Mammary epithelial cell (primary cell): ENCODE measurements at regions of chr18 and their contacts with region 1.

Region 1: DNA sequence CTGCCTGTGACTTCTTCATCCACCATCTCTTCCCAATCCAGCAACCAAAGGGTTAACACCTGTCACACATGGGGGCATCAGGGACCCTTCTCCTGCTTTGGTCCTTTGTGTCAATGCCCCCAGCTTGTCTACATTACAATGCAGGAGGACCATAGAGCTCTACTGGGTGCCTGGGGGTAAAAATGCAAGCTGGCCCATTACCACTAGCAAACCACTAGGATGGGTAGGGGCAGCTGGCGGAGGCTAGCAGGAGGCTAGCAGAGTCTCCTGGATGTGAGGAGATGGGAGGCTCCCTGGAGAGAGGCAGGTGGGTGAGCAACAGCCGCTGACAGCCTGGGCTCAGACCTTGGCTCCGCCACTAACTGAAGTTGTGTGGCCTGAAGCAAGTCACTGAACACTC is 153.4 kb upstream of the SKOR2 start:
- DNase-seq: no peak
- H3K4me3 ChIP-seq: no peak overlapping the region
- H3K27ac ChIP-seq: no peak overlapping the region
- H3K4me1 ChIP-seq: no peaks in the 10 kb centered on the region
- H3K27me3 ChIP-seq: no peaks in the 10 kb centered on the region
- CTCF ChIP-seq: no peak

Region 2: GRCh38 chr18:46843372-46843771 is 561.5 kb before region 1 on chr18:
- CTCF ChIA-PET with region 1: no interaction called
- dilution Hi-C with region 1: no loop called
- in situ Hi-C with region 1: no loop called
- intact Hi-C with region 1: no loop called
- DNase-seq: no peak
- H3K4me3 ChIP-seq: no peak overlapping the region
- H3K27ac ChIP-seq: no peak overlapping the region
- H3K4me1 ChIP-seq: no peaks in the 10 kb centered on the region
- H3K27me3 ChIP-seq: no peaks in the 10 kb centered on the region
- CTCF ChIP-seq: no peak

Region 3: GRCh38 chr18:47254341-47254939 is 150.4 kb before region 1 on chr18:
- CTCF ChIA-PET with region 1: no interaction called
- dilution Hi-C with region 1: no loop called
- in situ Hi-C with region 1: no loop called
- intact Hi-C with region 1: no loop called
- DNase-seq: peak; percentile 29
- H3K4me3 ChIP-seq: no peak overlapping the region
- H3K27ac ChIP-seq: no peak overlapping the region
- H3K4me1 ChIP-seq: peaks cover 4% of the 10 kb centered on the region
- H3K27me3 ChIP-seq: peaks cover 46% of the 10 kb centered on the region
- CTCF ChIP-seq: no peak

Region 4: GRCh38 chr18:47461406-47461948 is 56.6 kb after region 1 on chr18:
- CTCF ChIA-PET with region 1: no interaction called
- dilution Hi-C with region 1: loop called (anchors 5 kb)
- in situ Hi-C with region 1: no loop called
- intact Hi-C with region 1: no loop called
- DNase-seq: no peak
- H3K4me3 ChIP-seq: no peak overlapping the region
- H3K27ac ChIP-seq: no peak overlapping the region
- H3K4me1 ChIP-seq: no peaks in the 10 kb centered on the region
- H3K27me3 ChIP-seq: no peaks in the 10 kb centered on the region
- CTCF ChIP-seq: no peak

Region 5: DNA sequence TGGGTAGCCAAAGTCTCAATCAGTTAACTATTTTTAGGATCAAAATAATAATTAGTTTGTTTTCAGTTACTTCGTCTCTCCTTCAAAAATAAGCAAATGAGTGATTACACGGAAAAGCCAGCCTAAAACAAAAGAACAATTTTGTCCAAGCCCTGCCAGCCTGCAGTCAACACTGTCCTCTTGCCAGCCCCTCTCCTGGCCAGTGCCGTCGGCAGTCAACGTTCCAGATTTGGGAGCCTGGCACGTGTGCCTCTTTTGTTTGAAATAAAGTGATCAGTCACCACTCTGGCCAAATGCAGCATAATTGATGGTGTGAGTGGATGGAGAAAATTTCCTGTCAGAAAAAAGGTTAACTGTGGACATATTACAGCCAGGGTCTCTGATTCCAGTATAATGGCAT is 107.2 kb after region 1 on chr18:
- CTCF ChIA-PET with region 1: no interaction called
- dilution Hi-C with region 1: loop called (anchors 5 kb)
- in situ Hi-C with region 1: no loop called
- intact Hi-C with region 1: no loop called
- DNase-seq: no peak
- H3K4me3 ChIP-seq: no peak overlapping the region
- H3K27ac ChIP-seq: no peak overlapping the region
- H3K4me1 ChIP-seq: no peaks in the 10 kb centered on the region
- H3K27me3 ChIP-seq: no peaks in the 10 kb centered on the region
- CTCF ChIP-seq: no peak